ENCODE measurements at regions of chr4 and their contacts with region 1.

Region 1: GRCh38 chr4:142353149-142353738 is 492.9 kb downstream of the INPP4B start:
- DNase-seq: peak in 6 of 9 donors; percentile 21 to 50 (median 46)
- ATAC-seq: peak; percentile 61
- H3K4me3 ChIP-seq: no peak overlapping the region
- H3K4me3 Mint-ChIP-seq: peak overlapping the region in 9 of 10 donors; percentile 38 to 79 (median 70)
- H3K27ac ChIP-seq: peak overlapping the region; percentile 67
- H3K27ac Mint-ChIP-seq: peak overlapping the region; percentile 68 to 95 (median 92)
- H3K4me1 ChIP-seq: peaks cover 69 to 84% of the 10 kb centered on the region in 2 donors
- H3K4me1 Mint-ChIP-seq: peaks cover 58 to 100% (median 97%) of the 10 kb centered on the region in 7 donors
- H3K27me3 ChIP-seq: no peaks in the 10 kb centered on the region
- H3K27me3 Mint-ChIP-seq: no peaks in the 10 kb centered on the region

Region 2: GRCh38 chr4:142365387-142365786 is 12.1 kb after region 1 on chr4:
- CTCF ChIA-PET with region 1: interaction called, 4 read pairs
- POLR2A ChIA-PET with region 1: interaction called, 38 read pairs
- intact Hi-C with region 1: loop called in 1 of 2 experiments (anchors 1 kb)
- DNase-seq: no peak
- ATAC-seq: no peak
- H3K4me3 ChIP-seq: no peak overlapping the region
- H3K4me3 Mint-ChIP-seq: peak overlapping the region in 6 of 10 donors; percentile 13 to 85 (median 45)
- H3K27ac ChIP-seq: no peak overlapping the region
- H3K27ac Mint-ChIP-seq: peak overlapping the region in 8 of 9 donors; percentile 57 to 92 (median 80)
- H3K4me1 ChIP-seq: peaks cover 34 to 64% of the 10 kb centered on the region in 2 donors
- H3K4me1 Mint-ChIP-seq: peaks cover 46 to 92% (median 79%) of the 10 kb centered on the region in 7 donors
- H3K27me3 ChIP-seq: no peaks in the 10 kb centered on the region
- H3K27me3 Mint-ChIP-seq: no peaks in the 10 kb centered on the region

Region 3: GRCh38 chr4:142379277-142380057 is 26.2 kb after region 1 on chr4:
- CTCF ChIA-PET with region 1: interaction called, 8 read pairs
- POLR2A ChIA-PET with region 1: interaction called, 11 read pairs
- intact Hi-C with region 1: loop called in 1 of 2 experiments (anchors 1 kb)
- DNase-seq: no peak
- ATAC-seq: no peak
- H3K4me3 ChIP-seq: no peak overlapping the region
- H3K4me3 Mint-ChIP-seq: peak overlapping the region in 3 of 10 donors; percentile 28 to 72 (median 34)
- H3K27ac ChIP-seq: peak overlapping the region; percentile 53
- H3K27ac Mint-ChIP-seq: peak overlapping the region; percentile 8 to 85 (median 75)
- H3K4me1 ChIP-seq: peaks cover 41 to 64% of the 10 kb centered on the region in 2 donors
- H3K4me1 Mint-ChIP-seq: peaks cover 39 to 91% (median 87%) of the 10 kb centered on the region in 7 donors
- H3K27me3 ChIP-seq: no peaks in the 10 kb centered on the region
- H3K27me3 Mint-ChIP-seq: no peaks in the 10 kb centered on the region

Region 4: DNA sequence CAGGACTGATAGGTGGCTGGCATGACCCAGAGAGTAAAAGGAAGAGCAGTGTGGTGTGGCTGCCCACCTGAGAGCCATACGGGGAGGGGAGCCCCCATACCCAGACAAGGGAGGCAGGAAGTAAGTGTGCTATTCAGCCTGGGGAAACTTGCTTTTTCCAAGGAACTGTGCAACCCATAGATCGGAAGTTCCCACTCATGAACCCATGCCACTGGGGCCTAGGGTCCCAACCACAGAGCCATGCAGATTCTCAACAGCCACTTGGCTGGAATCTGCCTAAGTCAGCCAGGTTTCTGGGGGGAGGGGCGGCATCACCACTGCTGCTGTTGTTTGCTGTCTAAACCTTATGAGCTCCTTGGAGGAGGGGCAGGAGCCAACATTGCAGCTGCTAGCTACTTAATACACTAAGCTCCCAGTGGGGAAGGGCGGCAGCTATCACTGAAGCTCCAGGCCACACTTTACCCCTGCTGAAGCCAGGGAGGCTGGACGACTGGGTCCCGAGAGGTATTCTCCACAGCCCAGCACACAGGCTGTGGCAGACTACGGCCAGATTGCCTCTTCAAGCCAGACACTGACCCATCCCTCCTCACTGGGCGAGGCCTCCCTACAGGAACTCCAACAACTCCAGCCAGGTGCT is 82.5 kb after region 1 on chr4:
- CTCF ChIA-PET with region 1: interaction called, 4 read pairs
- POLR2A ChIA-PET with region 1: interaction called, 4 read pairs
- intact Hi-C with region 1: loop called in 1 of 2 experiments (anchors 1 kb)
- DNase-seq: no peak
- ATAC-seq: no peak
- H3K4me3 ChIP-seq: no peak overlapping the region
- H3K4me3 Mint-ChIP-seq: no peak overlapping the region
- H3K27ac ChIP-seq: no peak overlapping the region
- H3K27ac Mint-ChIP-seq: peak overlapping the region in 2 of 9 donors; percentile 21 to 49
- H3K4me1 ChIP-seq: peaks cover 4 to 8% of the 10 kb centered on the region in 2 donors
- H3K4me1 Mint-ChIP-seq: peaks cover 8 to 43% (median 31%) of the 10 kb centered on the region in 7 donors
- H3K27me3 ChIP-seq: no peaks in the 10 kb centered on the region
- H3K27me3 Mint-ChIP-seq: no peaks in the 10 kb centered on the region

Region 5: GRCh38 chr4:142719854-142720541 is 366.8 kb after region 1 on chr4:
- CTCF ChIA-PET with region 1: interaction called, 29 read pairs
- POLR2A ChIA-PET with region 1: interaction called, 8 read pairs
- intact Hi-C with region 1: loop called (anchors 1 kb)
- DNase-seq: peak in 6 of 9 donors; percentile 22 to 64 (median 58)
- ATAC-seq: peak; percentile 75
- H3K4me3 ChIP-seq: no peak overlapping the region
- H3K4me3 Mint-ChIP-seq: peak overlapping the region in 6 of 10 donors; percentile 16 to 51 (median 37)
- H3K27ac ChIP-seq: peak overlapping the region; percentile 43
- H3K27ac Mint-ChIP-seq: peak overlapping the region in 6 of 9 donors; percentile 43 to 91 (median 68)
- H3K4me1 ChIP-seq: peaks cover 0 to 10% of the 10 kb centered on the region in 2 donors
- H3K4me1 Mint-ChIP-seq: peaks cover 3 to 49% (median 30%) of the 10 kb centered on the region in 7 donors
- H3K27me3 ChIP-seq: no peaks in the 10 kb centered on the region
- H3K27me3 Mint-ChIP-seq: no peaks in the 10 kb centered on the region